AG04449 (cell line): ENCODE measurements at regions of chr3 and their contacts with region 1.

Region 1: GRCh38 chr3:128607710-128608048 is 42.9 kb downstream of the RPN1 start:
- DNase-seq: no peak
- H3K4me3 ChIP-seq: peak overlapping the region; percentile 63
- CTCF ChIP-seq: no peak

Region 2: GRCh38 chr3:128307029-128307633 is 300.5 kb before region 1 on chr3:
- CTCF ChIA-PET with region 1: interaction called, 13 read pairs
- POLR2A ChIA-PET with region 1: no interaction called
- DNase-seq: no peak
- H3K4me3 ChIP-seq: no peak overlapping the region
- CTCF ChIP-seq: no peak

Region 3: GRCh38 chr3:128482666-128483656 is 124.7 kb before region 1 on chr3:
- CTCF ChIA-PET with region 1: interaction called, 13 read pairs
- POLR2A ChIA-PET with region 1: no interaction called
- DNase-seq: peak; percentile 36
- H3K4me3 ChIP-seq: peak overlapping the region; percentile 26
- CTCF ChIP-seq: no peak

Region 4: GRCh38 chr3:128584412-128585020 is 23.2 kb before region 1 on chr3:
- CTCF ChIA-PET with region 1: interaction called, 14 read pairs
- POLR2A ChIA-PET with region 1: no interaction called
- DNase-seq: peak; percentile 23
- H3K4me3 ChIP-seq: no peak overlapping the region
- CTCF ChIP-seq: peak; percentile 98

Region 5: DNA sequence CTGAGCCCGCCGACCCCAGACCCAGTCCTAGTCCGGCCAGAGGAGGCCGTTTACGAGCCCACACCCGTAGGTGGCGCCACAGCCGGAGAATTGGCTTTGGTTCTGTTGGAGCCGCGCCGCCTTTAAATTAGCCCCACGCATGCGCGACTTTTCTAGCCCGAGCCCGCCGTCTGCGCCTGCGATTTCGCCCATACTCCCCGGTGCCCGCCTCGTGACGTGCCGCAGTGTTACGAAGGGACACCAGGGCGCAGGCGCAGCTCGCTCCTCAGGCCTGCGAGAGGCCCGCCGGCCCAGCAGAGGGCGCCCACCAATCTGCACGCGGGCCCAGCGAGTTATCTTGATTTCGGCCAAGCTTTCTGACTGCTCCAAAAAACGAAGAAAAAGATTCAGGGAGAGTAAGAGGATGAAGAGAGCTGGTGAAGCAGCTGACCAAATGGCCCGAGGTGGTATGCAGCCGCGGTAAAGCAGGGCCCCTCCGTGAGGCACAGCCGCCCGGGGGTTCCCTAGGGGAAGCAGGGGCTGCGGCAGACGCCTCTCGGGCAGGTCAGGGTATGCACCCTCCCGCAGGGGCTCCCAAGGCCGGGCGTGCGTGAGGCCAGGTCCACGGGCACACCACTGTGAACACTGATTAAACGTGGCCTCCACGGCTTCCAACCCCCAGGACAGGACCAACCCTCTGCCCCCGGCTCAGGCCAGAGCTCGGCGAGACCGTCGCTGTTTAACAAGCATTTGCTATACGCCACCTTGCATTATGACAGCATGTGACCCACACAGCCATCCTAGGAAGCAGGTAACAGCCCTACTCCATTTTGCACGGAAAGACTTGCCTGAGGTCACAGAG is 10.1 kb after region 1 on chr3:
- CTCF ChIA-PET with region 1: interaction called, 59 read pairs
- POLR2A ChIA-PET with region 1: no interaction called
- DNase-seq: peak; percentile 65
- H3K4me3 ChIP-seq: peak overlapping the region; percentile 85
- CTCF ChIP-seq: peak; percentile 92